Dendritic cell treated with granulocyte-macrophage colony-stimulating factor and Interleukin-4, amounts not matched to agents 40 ng/mL and 50 ng/mL, for 4 days (primary cell): ENCODE measurements at regions of chr21 and their contacts with region 1.

Region 1: GRCh38 chr21:25457411-25457810 is 149.9 kb downstream of the MRPL39 start:
- H3K4me3 Mint-ChIP-seq: no peak overlapping the region
- H3K27ac Mint-ChIP-seq: no peak overlapping the region
- H3K4me1 Mint-ChIP-seq: peaks cover 16% of the 10 kb centered on the region
- H3K27me3 Mint-ChIP-seq: no peaks in the 10 kb centered on the region

Region 2: DNA sequence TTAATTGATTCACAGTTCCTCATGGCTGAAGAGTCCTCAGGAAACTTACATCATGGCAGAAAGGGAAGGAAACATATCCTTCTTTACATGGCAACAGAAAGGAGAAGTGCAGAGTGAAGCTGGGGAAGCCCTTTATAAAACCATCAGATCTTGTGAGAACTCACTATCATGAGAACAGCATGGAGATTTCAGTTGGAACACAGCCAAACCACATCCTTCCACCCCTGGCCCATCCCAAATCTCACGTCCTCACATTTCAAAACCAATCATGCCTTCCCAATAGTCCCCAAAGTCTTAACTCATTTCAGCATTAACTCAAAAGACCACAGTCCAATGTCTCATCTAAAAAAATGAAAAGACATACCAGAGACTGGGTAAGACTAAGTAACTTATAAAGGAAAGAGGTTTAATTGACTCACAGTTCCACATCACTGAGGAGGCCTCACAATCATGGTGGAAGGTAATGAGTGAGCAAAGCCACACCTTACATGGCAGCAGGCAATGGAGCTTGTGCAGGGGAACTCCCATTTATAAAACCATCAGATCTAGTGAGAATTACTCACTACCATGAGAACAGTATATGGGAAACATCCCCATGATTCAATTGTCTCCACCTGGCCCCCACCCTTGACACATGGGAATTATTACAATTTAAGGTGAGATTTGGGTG is 44.7 kb after region 1 on chr21:
- intact Hi-C with region 1: loop called (anchors 5 kb)
- H3K4me3 Mint-ChIP-seq: no peak overlapping the region
- H3K27ac Mint-ChIP-seq: peak overlapping the region; percentile 32
- H3K4me1 Mint-ChIP-seq: peaks cover 17% of the 10 kb centered on the region
- H3K27me3 Mint-ChIP-seq: peaks cover 24% of the 10 kb centered on the region

Region 3: DNA sequence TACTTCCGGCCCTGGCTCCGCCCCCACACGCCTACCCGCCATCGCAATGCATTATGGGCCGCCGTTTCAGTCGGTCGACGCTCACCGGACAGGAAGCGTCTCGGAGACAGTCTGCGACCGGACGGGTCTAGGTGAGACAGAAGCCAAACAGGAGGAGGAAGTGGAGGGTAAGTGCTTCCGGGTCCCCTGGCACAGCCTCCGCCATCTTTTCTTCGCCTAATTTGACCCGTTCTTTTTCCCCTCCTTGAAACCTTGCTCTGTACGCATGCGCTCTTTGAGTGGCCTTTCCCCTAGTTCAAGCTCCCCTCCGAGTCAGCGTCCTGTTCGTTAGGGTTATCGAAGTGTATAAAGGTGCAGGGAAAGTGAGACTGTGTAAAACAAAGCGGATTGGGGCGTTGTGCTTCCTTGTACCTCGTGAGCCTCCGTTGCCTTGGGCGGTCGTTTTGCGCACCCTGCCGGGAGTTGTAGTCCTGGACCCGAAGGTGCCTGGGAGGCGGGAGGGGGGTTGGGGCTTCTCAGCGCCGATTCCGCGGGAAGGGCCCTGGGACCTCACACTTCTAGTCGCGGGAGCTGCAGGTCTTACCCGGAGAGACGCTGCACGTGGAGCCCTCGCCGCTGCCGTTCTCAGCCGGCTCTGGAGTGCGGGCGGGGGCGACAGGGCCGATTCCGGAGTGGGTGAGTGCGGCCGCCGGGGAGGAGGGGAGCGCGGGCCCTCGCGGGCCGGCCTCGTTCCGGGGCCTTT is 277.7 kb after region 1 on chr21 and contains the starts of genes ATP5PF and GABPA:
- intact Hi-C with region 1: loop called (anchors 2 kb)
- H3K4me3 Mint-ChIP-seq: peak within 1 kb of the TSS; percentile 96
- H3K27ac Mint-ChIP-seq: peak within 1 kb of the TSS; percentile 100
- H3K4me1 Mint-ChIP-seq: peaks cover 35% of the 10 kb centered on the region
- H3K27me3 Mint-ChIP-seq: no peaks in the 10 kb centered on the region